Naive thymus-derived CD4-positive, alpha-beta T cell (primary cell): ENCODE measurements at regions of chr9 and their contacts with region 1.

Region 1: DNA sequence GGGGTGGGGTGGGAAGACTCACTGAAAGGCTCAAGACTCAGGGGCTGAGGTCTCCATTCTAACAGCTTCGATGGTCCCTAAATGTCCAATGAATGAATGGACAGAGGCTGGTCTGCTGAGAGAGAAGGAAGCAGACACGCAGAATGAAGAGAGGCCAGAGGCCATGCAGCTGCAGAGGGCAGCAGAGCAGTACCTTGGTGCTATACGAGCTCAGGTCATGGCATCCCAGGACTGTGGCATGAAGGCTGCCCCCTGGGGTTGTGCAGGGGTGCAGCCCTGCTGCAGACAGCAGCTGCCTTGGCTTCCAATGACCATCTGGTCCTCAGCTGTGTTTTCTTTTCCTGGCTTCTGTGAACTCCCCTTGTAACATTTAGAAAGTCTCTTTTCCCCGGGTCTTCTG is 15.2 kb upstream of the CORO2A start:
- DNase-seq: no peak
- ATAC-seq: no peak
- H3K4me3 ChIP-seq: no peak overlapping the region
- H3K4me3 Mint-ChIP-seq: no peak overlapping the region
- H3K27ac ChIP-seq: no peak overlapping the region
- H3K27ac Mint-ChIP-seq: peak overlapping the region in 1 of 9 donors; percentile 28
- H3K4me1 ChIP-seq: no peaks in the 10 kb centered on the region
- H3K4me1 Mint-ChIP-seq: peaks cover 3 to 7% (median 6%) of the 10 kb centered on the region in 7 donors
- H3K27me3 ChIP-seq: no peaks in the 10 kb centered on the region
- H3K27me3 Mint-ChIP-seq: no peaks in the 10 kb centered on the region

Region 2: DNA sequence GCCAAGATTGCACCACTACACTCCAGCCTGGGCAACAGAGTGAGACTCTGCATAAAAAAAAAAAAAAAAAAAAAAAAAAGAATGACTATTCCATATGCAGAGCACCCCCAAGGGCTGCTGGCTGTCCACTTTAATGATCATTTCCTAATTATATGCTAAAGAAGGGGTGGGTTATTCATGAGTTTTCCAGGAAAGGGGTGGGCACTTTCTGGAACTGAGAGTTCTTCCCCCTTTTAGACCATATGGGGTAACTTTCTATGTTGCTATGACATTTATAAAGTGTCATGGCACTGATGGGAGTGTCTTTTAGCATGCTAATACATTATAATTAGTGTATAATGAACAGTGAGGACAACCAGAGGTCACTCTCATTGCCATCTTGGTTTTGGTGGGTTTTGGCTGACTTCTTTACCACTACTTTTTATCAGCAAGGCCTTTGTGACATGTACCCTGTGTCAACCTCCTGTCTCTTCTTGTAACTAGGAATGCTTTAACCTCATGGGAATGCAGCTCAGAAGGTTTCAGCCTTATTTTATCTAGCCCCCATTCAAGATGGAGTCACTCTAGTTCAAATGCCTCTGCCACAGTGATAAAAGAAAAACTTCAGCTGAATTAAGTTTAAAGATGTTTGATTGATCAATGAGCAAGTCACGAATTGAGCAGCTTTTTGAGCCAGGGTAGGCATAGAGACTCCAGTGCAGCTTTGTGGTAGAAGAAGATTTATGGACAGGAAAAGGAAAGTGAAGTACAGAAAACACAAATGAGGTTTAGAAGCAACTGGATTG is 158.1 kb before region 1 on chr9:
- CTCF ChIA-PET with region 1: no interaction called
- POLR2A ChIA-PET with region 1: no interaction called
- intact Hi-C with region 1: no loop called
- DNase-seq: no peak
- ATAC-seq: no peak
- H3K4me3 ChIP-seq: no peak overlapping the region
- H3K4me3 Mint-ChIP-seq: peak overlapping the region in 1 of 10 donors; percentile 35
- H3K27ac ChIP-seq: no peak overlapping the region
- H3K27ac Mint-ChIP-seq: peak overlapping the region in 6 of 9 donors; percentile 19 to 83 (median 55)
- H3K4me1 ChIP-seq: peaks cover 0 to 8% of the 10 kb centered on the region in 2 donors
- H3K4me1 Mint-ChIP-seq: peaks cover 8 to 57% (median 40%) of the 10 kb centered on the region in 7 donors
- H3K27me3 ChIP-seq: no peaks in the 10 kb centered on the region
- H3K27me3 Mint-ChIP-seq: no peaks in the 10 kb centered on the region

Region 3: DNA sequence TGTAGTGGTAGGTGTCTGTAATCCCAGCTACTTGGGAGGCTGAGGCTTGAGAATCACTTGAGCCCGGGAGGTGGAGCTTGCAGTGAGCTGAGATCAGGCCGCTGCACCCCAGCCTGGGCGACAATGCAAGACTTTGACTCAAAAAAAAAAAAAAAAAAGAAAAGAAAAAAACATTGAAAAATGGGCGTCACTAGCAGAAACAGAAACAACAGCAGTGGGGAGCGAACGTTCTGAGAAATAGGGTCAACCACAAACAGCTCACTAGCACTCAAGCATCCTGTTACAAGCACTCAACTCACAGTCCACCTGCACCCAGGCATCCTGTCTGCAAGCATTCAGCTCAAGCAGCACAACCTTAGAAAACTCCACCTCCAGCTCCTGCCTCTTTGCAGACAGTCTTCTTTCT is 105.7 kb before region 1 on chr9:
- CTCF ChIA-PET with region 1: interaction called, 3 read pairs
- POLR2A ChIA-PET with region 1: no interaction called
- intact Hi-C with region 1: loop called in 1 of 2 experiments (anchors 1 kb)
- DNase-seq: peak; percentile 35 to 96 (median 92)
- ATAC-seq: peak; percentile 99
- H3K4me3 ChIP-seq: peak overlapping the region; percentile 31
- H3K4me3 Mint-ChIP-seq: peak overlapping the region; percentile 66 to 86 (median 77)
- H3K27ac ChIP-seq: peak overlapping the region; percentile 78
- H3K27ac Mint-ChIP-seq: peak overlapping the region; percentile 87 to 99 (median 95)
- H3K4me1 ChIP-seq: peaks cover 88 to 91% of the 10 kb centered on the region in 2 donors
- H3K4me1 Mint-ChIP-seq: peaks cover 52 to 97% (median 88%) of the 10 kb centered on the region in 7 donors
- H3K27me3 ChIP-seq: no peaks in the 10 kb centered on the region
- H3K27me3 Mint-ChIP-seq: no peaks in the 10 kb centered on the region

Region 4: GRCh38 chr9:98263482-98264357 is 56.1 kb after region 1 on chr9:
- CTCF ChIA-PET with region 1: interaction called, 12 read pairs
- POLR2A ChIA-PET with region 1: no interaction called
- intact Hi-C with region 1: loop called (anchors 1 kb)
- DNase-seq: peak; percentile 54 to 82 (median 77)
- ATAC-seq: peak; percentile 100
- H3K4me3 ChIP-seq: no peak overlapping the region
- H3K4me3 Mint-ChIP-seq: no peak overlapping the region
- H3K27ac ChIP-seq: no peak overlapping the region
- H3K27ac Mint-ChIP-seq: peak overlapping the region in 1 of 9 donors; percentile 59
- H3K4me1 ChIP-seq: no peaks in the 10 kb centered on the region
- H3K4me1 Mint-ChIP-seq: peaks cover 0 to 3% (median 0%) of the 10 kb centered on the region in 7 donors
- H3K27me3 ChIP-seq: no peaks in the 10 kb centered on the region
- H3K27me3 Mint-ChIP-seq: peaks cover 0 to 23% (median 0%) of the 10 kb centered on the region in 5 donors

Region 5: GRCh38 chr9:98315551-98316060 is 108.0 kb after region 1 on chr9:
- CTCF ChIA-PET with region 1: no interaction called
- POLR2A ChIA-PET with region 1: no interaction called
- intact Hi-C with region 1: loop called in 1 of 2 experiments (anchors 1 kb)
- DNase-seq: peak; percentile 40 to 77 (median 65)
- ATAC-seq: peak; percentile 90
- H3K4me3 ChIP-seq: no peak overlapping the region
- H3K4me3 Mint-ChIP-seq: no peak overlapping the region
- H3K27ac ChIP-seq: no peak overlapping the region
- H3K27ac Mint-ChIP-seq: peak overlapping the region in 1 of 9 donors; percentile 7
- H3K4me1 ChIP-seq: no peaks in the 10 kb centered on the region
- H3K4me1 Mint-ChIP-seq: peaks cover 0 to 8% (median 0%) of the 10 kb centered on the region in 7 donors
- H3K27me3 ChIP-seq: no peaks in the 10 kb centered on the region
- H3K27me3 Mint-ChIP-seq: peaks cover 0 to 5% (median 0%) of the 10 kb centered on the region in 5 donors

Region 6: DNA sequence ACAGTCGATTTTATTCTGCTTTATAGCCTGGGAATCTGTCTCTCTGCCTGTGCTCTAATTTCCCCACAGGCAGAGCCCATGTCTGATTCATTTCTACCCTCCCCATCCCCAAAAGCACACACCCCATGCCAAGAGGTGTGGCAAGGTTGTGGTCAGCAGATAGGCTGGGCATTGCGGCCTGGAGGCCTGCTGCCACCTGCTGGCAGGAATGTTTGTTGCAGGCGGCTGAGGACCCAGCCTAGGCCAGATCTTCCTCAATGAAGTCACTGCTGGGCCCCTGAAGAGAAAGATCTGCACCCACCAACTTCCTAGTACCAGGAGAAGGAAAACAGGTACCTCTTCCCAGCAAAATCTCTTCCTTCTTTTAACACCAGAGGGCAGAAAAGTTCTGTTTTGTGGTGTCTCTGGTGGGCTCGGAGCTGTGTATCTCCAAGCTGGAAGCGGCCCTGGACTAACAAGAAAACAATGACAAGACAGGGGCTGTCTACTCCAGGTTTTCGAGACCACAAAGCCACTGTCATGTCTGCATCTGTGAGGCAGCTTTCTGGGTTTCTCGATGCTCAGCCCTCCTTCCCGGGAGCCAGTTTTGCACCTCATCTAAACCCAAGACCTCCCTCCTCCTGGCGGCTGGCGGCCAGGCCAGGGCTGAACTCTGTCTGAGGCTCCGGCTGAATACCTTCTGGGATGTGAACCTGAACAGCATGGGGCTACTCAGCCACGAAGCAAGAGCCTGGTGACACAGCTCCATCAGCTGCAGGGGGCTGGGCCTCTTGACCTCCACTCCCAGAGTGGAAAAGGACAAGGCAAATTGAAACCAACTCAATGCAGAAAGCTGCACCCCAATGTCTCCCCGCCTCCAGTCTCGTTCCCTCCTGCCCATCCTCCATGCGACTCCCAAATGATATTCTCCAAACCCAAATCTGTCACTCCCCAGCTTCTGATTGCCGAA is 583.8 kb after region 1 on chr9:
- CTCF ChIA-PET with region 1: no interaction called
- POLR2A ChIA-PET with region 1: no interaction called
- intact Hi-C with region 1: loop called in 1 of 2 experiments (anchors 5 kb)
- DNase-seq: peak in 8 of 9 donors; percentile 24 to 74 (median 40)
- ATAC-seq: peak; percentile 88
- H3K4me3 ChIP-seq: no peak overlapping the region
- H3K4me3 Mint-ChIP-seq: peak overlapping the region in 2 of 10 donors; percentile 15 to 29
- H3K27ac ChIP-seq: no peak overlapping the region
- H3K27ac Mint-ChIP-seq: peak overlapping the region in 5 of 9 donors; percentile 5 to 56 (median 19)
- H3K4me1 ChIP-seq: peaks cover 6 to 16% of the 10 kb centered on the region in 2 donors
- H3K4me1 Mint-ChIP-seq: peaks cover 17 to 33% (median 30%) of the 10 kb centered on the region in 7 donors
- H3K27me3 ChIP-seq: no peaks in the 10 kb centered on the region
- H3K27me3 Mint-ChIP-seq: peaks cover 0 to 9% (median 0%) of the 10 kb centered on the region in 5 donors